Naive thymus-derived CD4-positive, alpha-beta T cell (primary cell): ENCODE measurements at regions of chr1 and their contacts with region 1.

Region 1: GRCh38 chr1:45011837-45012638 is at the start of gene UROD:
- DNase-seq: peak; percentile 61 to 94 (median 89)
- ATAC-seq: peak; percentile 93
- H3K4me3 ChIP-seq: peak within 1 kb of the TSS; percentile 65
- H3K4me3 Mint-ChIP-seq: peak within 1 kb of the TSS; percentile 90 to 100 (median 93)
- H3K27ac ChIP-seq: peak within 1 kb of the TSS; percentile 81
- H3K27ac Mint-ChIP-seq: peak within 1 kb of the TSS; percentile 89 to 98 (median 94)
- H3K4me1 ChIP-seq: peaks cover 28 to 30% of the 10 kb centered on the region in 2 donors
- H3K4me1 Mint-ChIP-seq: peaks cover 29 to 64% (median 57%) of the 10 kb centered on the region in 7 donors
- H3K27me3 ChIP-seq: no peaks in the 10 kb centered on the region
- H3K27me3 Mint-ChIP-seq: no peaks in the 10 kb centered on the region
- total RNA-seq, gene UROD: 40.7 to 72.8 (median 58.1) TPM

Region 2: DNA sequence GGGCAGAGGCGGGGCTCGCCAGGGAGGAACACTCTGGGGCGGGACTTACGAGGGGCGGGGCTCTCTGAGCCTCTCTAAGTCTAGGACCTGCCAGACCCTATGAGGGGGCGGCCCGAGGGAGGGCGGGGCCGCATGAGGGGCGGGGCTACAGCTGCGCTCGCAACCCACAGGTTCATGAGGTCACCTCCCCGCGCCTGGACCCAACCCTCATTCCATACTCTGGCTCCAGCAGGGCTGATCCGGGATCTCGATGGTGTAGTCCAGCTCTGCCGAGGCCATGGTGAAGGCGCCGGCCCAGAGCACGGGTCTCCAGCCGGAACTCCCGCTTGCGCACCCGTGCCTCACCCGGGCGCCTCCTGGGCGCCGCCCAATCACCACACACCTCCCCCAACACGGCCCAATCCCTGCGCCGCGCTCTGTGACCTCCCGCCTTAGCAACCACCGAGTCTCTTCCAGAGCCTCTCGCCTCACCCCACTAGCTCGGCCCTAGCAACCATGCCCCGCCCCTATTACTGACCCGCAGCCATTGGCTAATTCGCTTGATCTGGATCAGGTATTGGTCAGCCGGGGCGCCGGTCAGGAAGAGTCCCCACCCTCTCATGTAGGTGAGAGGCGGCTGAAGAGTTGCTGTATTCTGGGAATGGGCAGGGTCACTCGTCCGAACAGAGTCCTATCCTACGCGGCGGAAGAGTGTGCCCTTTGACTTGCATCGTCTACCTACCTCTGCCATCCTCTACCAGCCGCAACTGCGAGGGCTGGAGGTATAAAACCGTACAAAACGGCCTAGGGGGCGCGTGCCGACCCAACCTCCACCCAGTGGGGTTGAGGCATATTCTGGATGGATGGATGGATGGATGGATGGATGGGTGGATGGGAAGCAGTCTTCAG is 337.7 kb before region 1 on chr1 and contains the starts of genes ARMH1 and TMEM53:
- CTCF ChIA-PET with region 1: no interaction called
- POLR2A ChIA-PET with region 1: no interaction called
- intact Hi-C with region 1: loop called in 1 of 2 experiments (anchors 1 kb)
- DNase-seq: peak; percentile 91 to 96 (median 95)
- ATAC-seq: peak; percentile 94
- H3K4me3 ChIP-seq: peak within 1 kb of the TSS; percentile 81
- H3K4me3 Mint-ChIP-seq: peak within 1 kb of the TSS; percentile 83 to 94 (median 91)
- H3K27ac ChIP-seq: peak within 1 kb of the TSS; percentile 76
- H3K27ac Mint-ChIP-seq: peak within 1 kb of the TSS; percentile 84 to 94 (median 91)
- H3K4me1 ChIP-seq: peaks cover 0 to 6% of the 10 kb centered on the region in 2 donors
- H3K4me1 Mint-ChIP-seq: peaks cover 13 to 34% (median 23%) of the 10 kb centered on the region in 7 donors
- H3K27me3 ChIP-seq: no peaks in the 10 kb centered on the region
- H3K27me3 Mint-ChIP-seq: no peaks in the 10 kb centered on the region
- total RNA-seq, gene ARMH1: 65.8 to 205 (median 87.0) TPM
- total RNA-seq, gene TMEM53: 1.6 to 3.5 (median 1.9) TPM

Region 3: GRCh38 chr1:44739361-44740178 is 272.5 kb before region 1 on chr1 and contains the start of gene KIF2C:
- CTCF ChIA-PET with region 1: no interaction called
- POLR2A ChIA-PET with region 1: interaction called, 3 read pairs
- intact Hi-C with region 1: loop called in 1 of 2 experiments (anchors 2 kb)
- DNase-seq: peak; percentile 87 to 96 (median 94)
- ATAC-seq: peak; percentile 100
- H3K4me3 ChIP-seq: peak within 1 kb of the TSS; percentile 79
- H3K4me3 Mint-ChIP-seq: peak within 1 kb of the TSS; percentile 84 to 99 (median 94)
- H3K27ac ChIP-seq: peak within 1 kb of the TSS; percentile 84
- H3K27ac Mint-ChIP-seq: peak within 1 kb of the TSS; percentile 86 to 97 (median 95)
- H3K4me1 ChIP-seq: peaks cover 5 to 7% of the 10 kb centered on the region in 2 donors
- H3K4me1 Mint-ChIP-seq: peaks cover 9 to 39% (median 19%) of the 10 kb centered on the region in 7 donors
- H3K27me3 ChIP-seq: no peaks in the 10 kb centered on the region
- H3K27me3 Mint-ChIP-seq: no peaks in the 10 kb centered on the region
- total RNA-seq, gene KIF2C: 0.32 to 69.3 (median 1.1) TPM

Region 4: DNA sequence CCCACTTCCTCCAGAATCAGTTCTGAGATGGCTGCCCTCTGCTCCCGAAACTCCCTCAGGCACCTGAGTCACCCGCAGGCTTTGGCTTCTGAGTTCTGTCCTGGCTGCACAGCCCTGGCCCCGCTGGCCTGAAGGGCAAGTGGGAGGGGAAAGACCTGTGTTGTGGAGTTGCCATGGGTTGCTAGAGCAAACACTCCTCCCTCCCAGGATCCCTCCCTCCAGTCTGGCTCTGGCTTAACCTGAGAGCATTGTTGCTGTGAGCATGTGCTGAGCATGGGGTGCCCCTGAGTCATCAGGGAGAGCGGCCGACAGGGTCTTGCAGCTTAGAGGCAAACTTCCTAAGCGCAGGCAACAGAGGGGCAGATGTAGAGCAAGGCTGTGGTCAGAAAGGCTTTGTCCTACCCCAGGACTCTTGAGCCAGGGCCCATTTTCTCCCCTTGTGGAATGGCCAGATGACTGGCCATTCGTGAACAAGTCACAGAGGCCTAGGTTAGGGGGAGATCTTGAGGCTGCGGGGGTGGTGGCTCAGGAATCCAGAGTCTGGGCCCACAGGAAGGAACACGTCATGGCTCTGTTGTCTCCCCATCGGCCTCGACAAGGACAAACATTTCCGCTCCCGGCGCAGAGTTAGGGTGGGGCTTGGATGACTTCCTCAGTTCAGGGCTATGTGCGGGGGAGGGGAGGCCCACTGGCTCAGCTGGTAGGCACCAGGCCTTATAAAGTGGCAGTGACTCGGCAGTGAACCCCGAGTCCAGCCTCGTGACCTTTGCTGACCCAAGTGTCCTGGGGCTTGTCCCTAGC is 204.6 kb before region 1 on chr1 and contains the start of gene DYNLT4:
- CTCF ChIA-PET with region 1: interaction called, 3 read pairs
- POLR2A ChIA-PET with region 1: interaction called, 19 read pairs
- intact Hi-C with region 1: no loop called
- DNase-seq: peak; percentile 78 to 96 (median 95)
- ATAC-seq: peak; percentile 68
- H3K4me3 ChIP-seq: peak within 1 kb of the TSS; percentile 48
- H3K4me3 Mint-ChIP-seq: peak within 1 kb of the TSS; percentile 63 to 90 (median 80)
- H3K27ac ChIP-seq: peak within 1 kb of the TSS; percentile 91
- H3K27ac Mint-ChIP-seq: peak within 1 kb of the TSS; percentile 98 to 100 (median 99)
- H3K4me1 ChIP-seq: peaks cover 66 to 67% of the 10 kb centered on the region in 2 donors
- H3K4me1 Mint-ChIP-seq: peaks cover 53 to 84% (median 77%) of the 10 kb centered on the region in 7 donors
- H3K27me3 ChIP-seq: no peaks in the 10 kb centered on the region
- H3K27me3 Mint-ChIP-seq: peaks cover 0 to 3% (median 0%) of the 10 kb centered on the region in 5 donors
- total RNA-seq, gene DYNLT4: 0.31 to 9.7 (median 0.87) TPM

Region 5: GRCh38 chr1:45205910-45206721 is 194.1 kb after region 1 on chr1 and contains the start of gene ZSWIM5:
- CTCF ChIA-PET with region 1: no interaction called
- POLR2A ChIA-PET with region 1: interaction called, 3 read pairs
- intact Hi-C with region 1: loop called (anchors 5 to 10 kb)
- DNase-seq: peak; percentile 53 to 74 (median 66)
- ATAC-seq: peak; percentile 88
- H3K4me3 ChIP-seq: peak within 1 kb of the TSS; percentile 77
- H3K4me3 Mint-ChIP-seq: peak within 1 kb of the TSS; percentile 84 to 100 (median 94)
- H3K27ac ChIP-seq: peak within 1 kb of the TSS; percentile 50
- H3K27ac Mint-ChIP-seq: peak within 1 kb of the TSS; percentile 66 to 94 (median 83)
- H3K4me1 ChIP-seq: peaks cover 11 to 18% of the 10 kb centered on the region in 2 donors
- H3K4me1 Mint-ChIP-seq: peaks cover 13 to 41% (median 27%) of the 10 kb centered on the region in 7 donors
- H3K27me3 ChIP-seq: no peaks in the 10 kb centered on the region
- H3K27me3 Mint-ChIP-seq: peaks cover 0 to 56% (median 0%) of the 10 kb centered on the region in 5 donors
- total RNA-seq, gene ZSWIM5: 0.17 to 3.6 (median 2.3) TPM

Region 6: GRCh38 chr1:45490626-45491486 is 478.8 kb after region 1 on chr1 and contains the start of gene TESK2:
- CTCF ChIA-PET with region 1: interaction called, 77 read pairs
- POLR2A ChIA-PET with region 1: interaction called, 42 read pairs
- intact Hi-C with region 1: loop called (anchors 1 kb)
- DNase-seq: peak; percentile 89 to 99 (median 98)
- ATAC-seq: peak; percentile 96
- H3K4me3 ChIP-seq: peak within 1 kb of the TSS; percentile 76
- H3K4me3 Mint-ChIP-seq: no peak within 1 kb of the TSS
- H3K27ac ChIP-seq: peak within 1 kb of the TSS; percentile 77
- H3K27ac Mint-ChIP-seq: no peak within 1 kb of the TSS
- H3K4me1 ChIP-seq: peaks cover 9% of the 10 kb centered on the region in 2 donors
- H3K4me1 Mint-ChIP-seq: peaks cover 5 to 15% (median 10%) of the 10 kb centered on the region in 7 donors
- H3K27me3 ChIP-seq: no peaks in the 10 kb centered on the region
- H3K27me3 Mint-ChIP-seq: peaks cover 0 to 4% (median 0%) of the 10 kb centered on the region in 5 donors
- total RNA-seq, gene TESK2: 3.3 to 8.9 (median 7.4) TPM

Region 7: DNA sequence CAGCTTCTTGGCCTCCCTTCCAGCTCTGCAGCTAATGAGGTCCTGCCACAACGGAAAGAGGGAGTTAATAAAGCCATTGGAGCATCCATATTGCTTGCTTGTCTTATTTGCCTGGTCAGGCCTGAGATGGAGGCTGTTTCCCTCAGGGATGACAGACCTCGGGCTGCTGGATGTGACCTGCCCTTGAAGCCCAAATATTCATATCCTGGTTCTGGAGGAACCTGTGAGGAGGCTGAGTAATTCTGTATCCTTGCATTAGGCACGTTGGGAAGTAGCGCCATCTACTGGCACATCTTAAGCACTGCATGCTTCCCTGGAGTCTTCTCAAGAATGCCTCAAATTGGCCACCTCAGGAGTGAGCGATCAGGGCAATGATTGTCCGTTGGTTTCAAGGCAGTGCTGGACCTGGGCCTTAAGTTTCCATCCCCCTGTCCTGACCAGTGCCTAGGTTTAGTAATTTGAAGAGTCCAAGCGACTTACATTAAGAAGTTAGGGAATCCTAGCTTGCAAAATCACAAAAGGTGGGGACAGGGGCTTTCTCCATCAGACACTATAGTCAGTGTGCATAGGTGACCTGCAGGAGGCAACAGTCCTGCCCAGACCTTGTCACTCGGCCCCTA is 558.0 kb after region 1 on chr1:
- CTCF ChIA-PET with region 1: interaction called, 3 read pairs
- POLR2A ChIA-PET with region 1: no interaction called
- intact Hi-C with region 1: loop called in 1 of 2 experiments (anchors 1 kb)
- DNase-seq: peak; percentile 46 to 74 (median 65)
- ATAC-seq: peak; percentile 99
- H3K4me3 ChIP-seq: no peak overlapping the region
- H3K4me3 Mint-ChIP-seq: no peak overlapping the region
- H3K27ac ChIP-seq: no peak overlapping the region
- H3K27ac Mint-ChIP-seq: peak overlapping the region in 1 of 9 donors; percentile 63
- H3K4me1 ChIP-seq: no peaks in the 10 kb centered on the region
- H3K4me1 Mint-ChIP-seq: peaks cover 0 to 4% (median 0%) of the 10 kb centered on the region in 7 donors
- H3K27me3 ChIP-seq: no peaks in the 10 kb centered on the region
- H3K27me3 Mint-ChIP-seq: no peaks in the 10 kb centered on the region